Endothelial cell of umbilical vein (primary cell): ENCODE measurements at regions of chr22 and their contacts with region 1.

Region 1: DNA sequence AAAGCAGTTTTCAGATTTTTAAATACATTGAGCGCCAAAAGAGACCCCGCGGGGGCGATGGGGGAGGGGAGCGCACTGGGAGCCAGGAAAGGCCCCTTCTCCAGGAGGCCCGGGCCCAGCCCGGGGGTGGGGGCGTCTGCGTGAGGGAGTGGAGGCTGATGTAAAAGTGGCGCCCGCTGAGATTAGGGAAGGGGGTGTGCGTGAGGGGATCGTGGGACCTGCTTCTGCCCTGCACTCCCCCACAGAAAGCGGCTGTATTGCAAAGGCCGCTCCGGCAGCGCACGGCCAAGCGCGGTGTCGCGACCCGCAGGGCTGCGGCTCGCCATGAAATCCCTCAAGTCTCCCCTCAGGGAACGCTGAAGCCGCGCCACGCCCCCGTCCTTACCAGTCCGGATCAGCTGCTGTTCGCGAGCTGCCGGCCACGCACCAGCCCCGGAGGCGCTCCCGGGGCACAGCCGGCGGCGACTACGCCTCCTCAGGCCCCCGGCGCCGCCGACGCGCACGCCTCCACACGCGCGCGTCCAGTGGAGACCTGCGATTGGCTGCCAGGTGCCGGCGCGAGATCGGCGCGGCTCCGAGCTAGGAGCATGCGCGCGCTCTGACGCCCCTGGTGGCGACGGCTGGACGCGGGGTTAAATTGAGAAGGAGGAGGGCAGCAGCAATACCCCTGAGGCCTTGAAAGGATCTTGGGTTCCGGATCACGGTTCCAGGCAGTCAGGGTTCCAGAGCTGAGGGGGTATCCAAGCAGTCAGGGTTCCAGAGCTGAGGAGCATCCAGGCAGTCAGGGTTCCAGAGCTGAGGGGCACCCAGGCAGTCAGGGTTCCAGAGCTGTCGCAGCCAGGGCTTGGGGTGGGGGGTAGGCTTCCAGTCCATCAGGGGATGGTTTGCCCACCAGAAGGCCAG is at the start of gene ZNF280B:
- DNase-seq: peak; percentile 89
- H3K4me3 ChIP-seq: peak within 1 kb of the TSS; percentile 62 to 80 (median 62)
- H3K27ac ChIP-seq: peak within 1 kb of the TSS; percentile 16
- H3K4me1 ChIP-seq: peaks cover 4% of the 10 kb centered on the region
- H3K27me3 ChIP-seq: peaks cover 3 to 4% of the 10 kb centered on the region in 2 experiments
- CTCF ChIP-seq: peak; percentile 82 to 92
- POLR2A ChIP-seq: peak; percentile 39
- total RNA-seq, gene ZNF280B: 3.1 TPM in 2 replicates

Region 2: GRCh38 chr22:22488736-22489135 is 19.8 kb before region 1 on chr22:
- CTCF ChIA-PET with region 1: interaction called, 12 read pairs
- POLR2A ChIA-PET with region 1: no interaction called
- dilution Hi-C with region 1: no loop called
- intact Hi-C with region 1: no loop called
- DNase-seq: no peak
- H3K4me3 ChIP-seq: no peak overlapping the region
- H3K27ac ChIP-seq: no peak overlapping the region
- H3K4me1 ChIP-seq: no peaks in the 10 kb centered on the region
- H3K27me3 ChIP-seq: no peaks in the 10 kb centered on the region
- CTCF ChIP-seq: no peak
- POLR2A ChIP-seq: no peak

Region 3: DNA sequence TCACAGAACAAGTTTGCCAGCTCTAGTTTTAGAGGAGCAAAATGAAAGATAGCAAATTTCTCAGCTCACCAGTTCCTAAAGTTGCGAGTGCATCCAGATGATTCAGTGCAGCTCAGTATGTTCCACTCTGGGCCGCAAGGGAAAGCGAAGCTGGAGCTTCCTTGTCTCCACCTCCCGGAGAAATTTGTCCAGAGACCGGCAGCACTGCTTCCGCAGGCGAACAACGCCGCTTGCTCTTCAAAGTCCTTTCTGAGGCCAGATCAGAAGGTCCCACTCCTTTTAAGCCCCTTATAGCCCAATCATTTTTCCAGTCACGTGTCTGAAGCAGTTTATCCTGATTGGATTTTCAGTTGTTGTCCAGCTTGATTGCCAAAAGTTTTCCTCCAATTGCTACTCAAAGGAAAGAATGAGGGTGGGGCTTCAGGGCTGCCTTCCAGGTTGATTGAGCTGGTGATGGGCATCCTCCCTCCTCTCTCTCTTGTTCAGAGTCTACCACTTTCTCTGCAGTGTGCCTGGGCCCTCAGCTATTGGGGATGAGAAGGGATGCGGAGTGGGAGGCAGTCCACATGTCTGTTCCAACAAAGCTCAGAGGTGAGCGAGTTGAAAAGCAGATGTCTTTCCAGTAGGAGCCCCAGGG is 11.6 kb after region 1 on chr22 and contains the start of gene ZNF280A:
- CTCF ChIA-PET with region 1: interaction called, 18 read pairs
- POLR2A ChIA-PET with region 1: no interaction called
- dilution Hi-C with region 1: no loop called
- intact Hi-C with region 1: no loop called
- DNase-seq: peak; percentile 7
- H3K4me3 ChIP-seq: no peak within 1 kb of the TSS
- H3K27ac ChIP-seq: no peak within 1 kb of the TSS
- H3K4me1 ChIP-seq: peaks cover 5% of the 10 kb centered on the region
- H3K27me3 ChIP-seq: peaks cover 0 to 2% of the 10 kb centered on the region in 2 experiments
- CTCF ChIP-seq: no peak
- POLR2A ChIP-seq: no peak
- total RNA-seq, gene ZNF280A: 0.15 TPM in 1 of 2 replicates, not detected in the other